IMR-90 (cell line): ENCODE measurements at regions of chr6 and their contacts with region 1.

Region 1: DNA sequence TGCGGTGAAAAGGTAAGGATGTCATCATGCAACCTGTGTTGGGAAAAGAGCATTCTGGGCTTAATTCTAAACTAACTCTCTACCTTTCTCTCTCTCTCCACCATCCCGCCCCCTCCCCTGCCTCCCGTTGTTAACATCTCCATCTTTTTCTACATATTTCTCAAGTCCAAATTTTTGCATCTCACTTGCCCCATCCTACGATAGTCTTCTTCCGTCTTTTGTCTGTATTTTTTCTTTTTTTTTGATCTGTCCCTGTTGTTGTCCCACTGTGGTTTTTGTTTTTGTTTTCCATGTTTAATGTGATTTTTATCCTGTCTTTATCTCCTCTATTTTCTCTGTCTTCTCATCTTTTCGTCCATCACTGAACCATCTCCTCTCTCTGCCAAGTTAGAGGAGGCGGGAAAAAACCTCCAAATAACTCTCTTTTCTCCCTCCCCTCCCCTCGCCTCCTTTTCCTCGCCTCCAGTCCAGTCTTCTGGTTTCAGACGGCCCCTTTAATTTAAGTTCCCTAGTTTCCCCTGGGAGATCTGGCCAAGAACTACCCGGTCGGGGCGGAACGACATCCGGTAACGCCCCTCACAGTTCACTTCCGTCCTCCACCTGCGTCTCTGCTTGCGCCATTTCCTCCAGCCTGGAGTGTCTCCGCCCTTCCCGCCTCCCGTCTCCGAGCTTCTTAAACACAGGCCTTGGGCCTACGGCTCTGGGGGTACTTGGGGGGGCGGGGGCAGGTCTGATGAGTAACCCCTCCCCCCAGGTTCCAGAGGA is at the start of gene NFKBIL1:
- DNase-seq: peak; percentile 98
- ATAC-seq: peak; percentile 81
- H3K4me3 ChIP-seq: peak within 1 kb of the TSS; percentile 45
- H3K27ac ChIP-seq: peak within 1 kb of the TSS; percentile 74
- H3K4me1 ChIP-seq: peaks cover 6% of the 10 kb centered on the region
- H3K27me3 ChIP-seq: no peaks in the 10 kb centered on the region
- CTCF ChIP-seq: no peak
- POLR2A ChIP-seq: peak; percentile 87
- RAD21 ChIP-seq: no peak
- total RNA-seq, gene NFKBIL1: 10.0 and 10.8 TPM in 2 replicates

Region 2: DNA sequence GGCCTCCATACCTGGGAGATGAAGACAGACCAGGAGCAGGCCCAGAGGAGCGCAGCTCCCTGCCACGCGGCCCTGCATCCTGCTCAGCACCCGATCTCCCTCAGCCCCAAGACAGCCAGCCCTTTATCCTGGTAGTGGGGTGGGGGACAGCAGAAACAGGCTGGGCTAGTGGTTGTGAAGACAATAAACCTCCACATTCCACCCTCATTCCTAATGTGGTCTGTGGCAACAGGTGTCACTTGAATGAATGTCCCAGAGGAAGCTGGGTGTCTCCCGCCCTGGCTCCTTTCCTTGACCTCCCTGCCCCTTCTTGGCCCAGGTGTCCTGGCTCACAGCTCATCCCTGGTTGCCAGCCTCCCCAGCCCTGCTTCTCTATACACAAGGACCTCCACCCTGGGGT is 434.7 kb before region 1 on chr6 and contains the start of gene C6orf15:
- CTCF ChIA-PET with region 1: no interaction called
- POLR2A ChIA-PET with region 1: no interaction called
- dilution Hi-C with region 1: no loop called
- in situ Hi-C with region 1: no loop called
- intact Hi-C with region 1: no loop called
- DNase-seq: no peak
- ATAC-seq: no peak
- H3K4me3 ChIP-seq: no peak within 1 kb of the TSS
- H3K27ac ChIP-seq: no peak within 1 kb of the TSS
- H3K4me1 ChIP-seq: peaks cover 11% of the 10 kb centered on the region
- H3K27me3 ChIP-seq: peaks cover 28% of the 10 kb centered on the region
- CTCF ChIP-seq: no peak
- POLR2A ChIP-seq: no peak
- RAD21 ChIP-seq: no peak
- total RNA-seq, gene C6orf15: not detected in 2 replicates

Region 3: GRCh38 chr6:31122791-31123706 is 424.1 kb before region 1 on chr6:
- CTCF ChIA-PET with region 1: no interaction called
- POLR2A ChIA-PET with region 1: no interaction called
- dilution Hi-C with region 1: no loop called
- in situ Hi-C with region 1: no loop called
- intact Hi-C with region 1: no loop called
- DNase-seq: peak; percentile 76
- ATAC-seq: peak; percentile 73
- H3K4me3 ChIP-seq: no peak overlapping the region
- H3K27ac ChIP-seq: no peak overlapping the region
- H3K4me1 ChIP-seq: peaks cover 2% of the 10 kb centered on the region; the same call in 1 of the 2 replicates
- H3K27me3 ChIP-seq: peaks cover 3% of the 10 kb centered on the region; the same call in 1 of the 2 replicates
- CTCF ChIP-seq: no peak
- POLR2A ChIP-seq: no peak
- RAD21 ChIP-seq: no peak

Region 4: GRCh38 chr6:31403283-31403989 is 143.7 kb before region 1 on chr6 and contains the start of gene MICA:
- CTCF ChIA-PET with region 1: no interaction called
- POLR2A ChIA-PET with region 1: no interaction called
- dilution Hi-C with region 1: no loop called
- in situ Hi-C with region 1: no loop called
- intact Hi-C with region 1: loop called (anchors 1 kb)
- DNase-seq: peak; percentile 79
- ATAC-seq: peak; percentile 74
- H3K4me3 ChIP-seq: peak within 1 kb of the TSS; percentile 83
- H3K27ac ChIP-seq: peak within 1 kb of the TSS; percentile 13
- H3K4me1 ChIP-seq: peaks cover 5% of the 10 kb centered on the region
- H3K27me3 ChIP-seq: no peaks in the 10 kb centered on the region
- CTCF ChIP-seq: no peak
- POLR2A ChIP-seq: peak; percentile 76; the same call in 1 of the 2 replicates
- RAD21 ChIP-seq: no peak
- total RNA-seq, gene MICA: 52.2 and 55.9 TPM in 2 replicates

Region 5: DNA sequence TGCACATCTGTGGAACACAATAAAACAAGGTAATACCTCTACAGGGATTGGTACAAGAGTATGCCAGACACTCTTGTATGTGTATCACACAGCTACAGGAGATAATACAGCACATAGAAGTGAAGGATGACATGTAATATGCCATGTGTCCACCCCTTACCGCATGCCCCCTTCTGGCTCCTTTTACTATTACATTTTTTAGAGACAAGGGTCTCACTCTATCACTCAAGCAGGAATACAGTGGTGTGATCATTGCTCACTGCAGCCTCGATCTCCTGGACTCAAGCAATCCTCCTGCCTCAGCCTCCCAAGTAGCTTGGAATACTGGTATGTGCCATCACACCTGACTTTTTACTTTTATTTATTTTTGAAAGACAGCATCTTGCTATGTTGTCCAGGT is 49.9 kb after region 1 on chr6:
- CTCF ChIA-PET with region 1: interaction called, 17 read pairs
- POLR2A ChIA-PET with region 1: interaction called, 7 read pairs
- dilution Hi-C with region 1: no loop called
- in situ Hi-C with region 1: loop called (anchors 5 kb)
- intact Hi-C with region 1: loop called (anchors 1 kb)
- DNase-seq: peak; percentile 31
- ATAC-seq: peak; percentile 56; the same call in 1 of the 2 replicates
- H3K4me3 ChIP-seq: no peak overlapping the region
- H3K27ac ChIP-seq: no peak overlapping the region
- H3K4me1 ChIP-seq: no peaks in the 10 kb centered on the region
- H3K27me3 ChIP-seq: no peaks in the 10 kb centered on the region; the same call in 1 of the 2 replicates
- CTCF ChIP-seq: peak; percentile 37
- POLR2A ChIP-seq: no peak
- RAD21 ChIP-seq: peak; percentile 42

Region 6: GRCh38 chr6:31665501-31666336 is 118.6 kb after region 1 on chr6 and contains the start of gene CSNK2B:
- CTCF ChIA-PET with region 1: interaction called, 3 read pairs
- POLR2A ChIA-PET with region 1: interaction called, 5 read pairs
- dilution Hi-C with region 1: no loop called
- in situ Hi-C with region 1: no loop called
- intact Hi-C with region 1: loop called (anchors 2 kb)
- DNase-seq: peak; percentile 96
- ATAC-seq: peak; percentile 80
- H3K4me3 ChIP-seq: peak within 1 kb of the TSS; percentile 95
- H3K27ac ChIP-seq: peak within 1 kb of the TSS; percentile 97
- H3K4me1 ChIP-seq: peaks cover 16% of the 10 kb centered on the region
- H3K27me3 ChIP-seq: no peaks in the 10 kb centered on the region
- CTCF ChIP-seq: no peak
- POLR2A ChIP-seq: peak; percentile 70
- RAD21 ChIP-seq: no peak
- total RNA-seq, gene CSNK2B: 218 and 240 TPM in 2 replicates

Region 7: GRCh38 chr6:31827286-31828079 is 280.3 kb after region 1 on chr6 and contains the start of gene HSPA1B:
- CTCF ChIA-PET with region 1: no interaction called
- POLR2A ChIA-PET with region 1: no interaction called
- dilution Hi-C with region 1: no loop called
- in situ Hi-C with region 1: loop called (anchors 10 kb)
- intact Hi-C with region 1: loop called (anchors 5 kb)
- DNase-seq: peak; percentile 100
- ATAC-seq: peak; percentile 92
- H3K4me3 ChIP-seq: peak within 1 kb of the TSS; percentile 64
- H3K27ac ChIP-seq: peak within 1 kb of the TSS; percentile 93
- H3K4me1 ChIP-seq: peaks cover 9% of the 10 kb centered on the region
- H3K27me3 ChIP-seq: no peaks in the 10 kb centered on the region
- CTCF ChIP-seq: no peak
- POLR2A ChIP-seq: peak; percentile 99
- RAD21 ChIP-seq: no peak
- total RNA-seq, gene HSPA1B: 93.6 and 118 TPM in 2 replicates

Region 8: DNA sequence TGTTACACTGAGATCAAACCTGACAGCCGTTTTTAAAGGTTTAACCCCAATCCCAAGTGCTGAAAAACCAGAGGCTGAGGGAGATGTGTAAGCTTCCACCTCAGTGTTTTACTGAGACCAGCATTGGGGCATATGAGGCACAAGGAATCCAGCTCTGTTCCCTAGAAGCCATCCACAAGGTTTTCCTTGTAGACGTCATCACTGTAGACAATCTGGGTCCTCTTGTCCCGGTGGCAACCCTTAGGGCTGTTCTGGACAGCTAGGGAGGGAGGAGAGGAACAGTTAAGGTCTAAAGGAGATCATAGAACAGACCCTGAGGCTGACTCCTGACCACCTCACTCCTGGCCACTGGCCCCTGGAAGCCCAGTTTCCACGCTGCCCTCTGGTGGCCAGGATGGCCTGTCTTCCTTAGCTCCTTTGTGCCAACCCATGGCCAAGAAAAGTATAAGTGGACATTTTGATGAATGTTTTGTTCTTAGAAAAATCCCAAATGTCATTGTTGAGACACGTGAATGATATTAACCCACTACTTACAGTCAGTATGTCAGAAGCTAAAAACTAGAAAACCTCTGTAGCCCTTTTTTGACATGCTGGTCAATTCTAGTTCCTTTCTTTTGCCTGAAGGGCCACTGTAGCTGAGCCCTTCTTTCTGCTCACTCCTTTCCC is 405.1 kb after region 1 on chr6:
- CTCF ChIA-PET with region 1: no interaction called
- POLR2A ChIA-PET with region 1: no interaction called
- dilution Hi-C with region 1: no loop called
- in situ Hi-C with region 1: no loop called
- intact Hi-C with region 1: loop called (anchors 5 kb)
- DNase-seq: peak; percentile 63
- ATAC-seq: peak; percentile 96
- H3K4me3 ChIP-seq: no peak overlapping the region
- H3K27ac ChIP-seq: no peak overlapping the region
- H3K4me1 ChIP-seq: peaks cover 6% of the 10 kb centered on the region
- H3K27me3 ChIP-seq: no peaks in the 10 kb centered on the region
- CTCF ChIP-seq: peak; percentile 84
- POLR2A ChIP-seq: no peak
- RAD21 ChIP-seq: peak; percentile 83